Activated CD8-positive, alpha-beta T cell treated with anti-CD3 and anti-CD28 coated beads, Interleukin-2, amount 10 ng/mL, durations not matched to agents 7 days and 5 days (primary cell): ENCODE measurements at regions of chr2 and their contacts with region 1.

Region 1: DNA sequence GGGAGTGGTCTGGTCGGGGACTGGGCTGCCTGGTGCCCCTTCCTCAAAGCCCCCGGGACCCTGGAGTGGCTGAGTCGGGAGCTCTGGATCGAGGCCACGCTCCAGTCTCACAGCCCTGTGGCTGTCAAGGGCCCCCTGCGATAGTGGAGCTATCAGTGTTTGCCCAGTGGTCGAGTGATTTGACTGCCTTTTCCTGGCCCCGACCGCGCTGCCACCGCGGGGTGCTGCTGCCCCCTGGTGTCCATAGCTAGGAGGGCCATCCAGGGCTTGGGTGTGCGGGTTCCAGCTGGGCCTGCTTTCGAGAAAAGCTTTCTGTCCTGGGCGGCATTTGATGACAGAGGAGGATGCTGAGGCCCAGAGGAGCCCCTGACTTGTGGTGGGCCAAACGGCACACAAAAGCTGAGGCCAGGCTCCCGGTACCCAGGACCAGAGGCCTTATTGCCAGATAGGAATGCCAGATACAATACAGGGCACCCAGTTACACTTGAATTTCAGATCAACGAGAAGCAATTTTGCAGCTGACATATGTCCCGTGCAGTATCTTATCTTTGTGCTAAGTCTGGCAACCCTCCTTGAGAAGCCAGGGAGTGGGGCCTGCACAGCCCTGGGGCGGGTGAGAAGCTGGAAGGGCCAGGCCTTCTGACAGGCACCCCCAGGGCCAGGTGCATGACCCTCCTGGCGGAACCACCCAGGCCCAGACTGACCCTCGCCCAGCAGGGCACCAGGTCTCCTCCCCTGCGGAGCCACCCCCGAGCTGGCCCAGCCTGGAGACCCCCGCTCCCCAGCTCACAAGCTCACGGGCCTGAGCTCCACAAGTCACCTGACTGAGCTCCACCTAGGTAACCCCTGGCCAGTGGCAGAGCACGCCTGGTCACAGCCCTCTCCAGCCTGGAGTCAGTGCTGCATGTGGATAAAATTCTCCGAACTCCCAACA is 13.0 kb downstream of the ODC1 start:
- DNase-seq: peak; percentile 83
- ATAC-seq: peak; percentile 66
- H3K4me3 Mint-ChIP-seq: no peak overlapping the region
- H3K27ac Mint-ChIP-seq: peak overlapping the region; percentile 8
- H3K4me1 Mint-ChIP-seq: peaks cover 11% of the 10 kb centered on the region
- H3K27me3 Mint-ChIP-seq: peaks cover 15% of the 10 kb centered on the region

Region 2: DNA sequence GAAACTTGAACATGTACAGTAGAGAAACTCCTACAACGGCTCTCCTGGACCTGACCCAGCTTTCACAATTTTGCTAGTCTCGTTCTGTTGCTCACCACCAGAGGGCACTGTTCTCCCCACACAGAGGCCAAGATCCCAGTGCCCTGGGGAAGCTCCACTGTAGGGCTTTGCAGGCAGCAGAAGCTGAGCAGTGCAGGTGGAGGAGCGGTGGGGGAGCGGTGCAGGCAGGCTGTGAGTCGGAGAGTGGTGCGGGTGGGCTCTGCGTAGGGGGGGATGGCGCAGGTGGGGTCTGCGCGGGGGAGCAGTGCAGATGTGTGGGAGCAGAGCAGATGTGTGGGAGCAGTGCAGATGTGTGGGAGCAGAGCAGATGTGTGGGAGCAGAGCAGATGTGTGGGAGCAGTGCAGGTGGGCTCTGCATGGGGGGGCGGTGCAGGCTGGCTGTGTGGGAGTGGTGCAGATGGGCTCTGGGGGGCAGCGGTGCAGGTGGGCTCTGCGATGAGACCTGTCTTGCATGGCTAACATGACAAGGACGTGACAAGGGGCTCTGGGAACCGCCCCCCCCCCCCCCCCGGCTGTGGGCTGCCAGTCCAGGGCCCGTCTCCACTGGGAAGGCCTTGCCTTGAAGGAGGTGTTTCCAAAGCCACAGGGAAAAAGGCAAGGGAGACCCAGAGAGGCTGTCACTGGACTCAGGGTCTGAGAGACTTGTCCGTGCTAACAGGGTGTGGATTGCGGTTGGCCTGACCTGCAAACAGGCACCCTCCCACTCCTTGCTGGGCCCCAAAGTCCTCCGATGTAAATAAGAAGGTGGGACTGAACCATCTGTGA is 362.3 kb before region 1 on chr2:
- CTCF ChIA-PET with region 1: interaction called, 95 read pairs
- POLR2A ChIA-PET with region 1: interaction called, 9 read pairs
- DNase-seq: peak; percentile 89
- ATAC-seq: peak; percentile 97
- H3K4me3 Mint-ChIP-seq: no peak overlapping the region
- H3K27ac Mint-ChIP-seq: no peak overlapping the region
- H3K4me1 Mint-ChIP-seq: peaks cover 13% of the 10 kb centered on the region
- H3K27me3 Mint-ChIP-seq: peaks cover 51% of the 10 kb centered on the region

Region 3: GRCh38 chr2:10122386-10123280 is 312.5 kb before region 1 on chr2 and contains the start of gene RRM2:
- CTCF ChIA-PET with region 1: interaction called, 74 read pairs
- POLR2A ChIA-PET with region 1: interaction called, 4 read pairs
- DNase-seq: peak; percentile 98
- ATAC-seq: peak; percentile 81
- H3K4me3 Mint-ChIP-seq: peak within 1 kb of the TSS; percentile 98
- H3K27ac Mint-ChIP-seq: peak within 1 kb of the TSS; percentile 99
- H3K4me1 Mint-ChIP-seq: peaks cover 55% of the 10 kb centered on the region
- H3K27me3 Mint-ChIP-seq: no peaks in the 10 kb centered on the region
- total RNA-seq, gene RRM2: 571 to 604 TPM

Region 4: DNA sequence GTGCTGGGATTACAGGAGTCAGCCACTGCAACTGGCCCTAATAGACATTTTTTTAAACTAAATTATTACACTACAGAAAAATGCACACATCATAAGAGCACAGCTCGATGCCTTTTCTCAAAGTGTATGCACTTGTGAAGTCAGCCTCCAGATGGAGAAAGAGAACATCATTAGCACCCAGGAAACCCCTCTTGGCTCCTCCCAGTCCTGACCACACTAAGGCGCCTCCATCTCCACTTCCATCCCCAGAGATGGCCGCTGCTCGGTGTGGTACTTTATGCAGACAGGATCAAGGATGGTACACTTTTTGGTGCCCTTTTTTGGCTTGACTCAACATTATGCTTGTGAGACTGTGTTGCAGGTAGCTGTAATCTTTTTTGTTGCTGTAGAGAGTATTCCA is 277.9 kb before region 1 on chr2:
- CTCF ChIA-PET with region 1: interaction called, 18 read pairs
- POLR2A ChIA-PET with region 1: no interaction called
- DNase-seq: no peak
- ATAC-seq: no peak
- H3K4me3 Mint-ChIP-seq: no peak overlapping the region
- H3K27ac Mint-ChIP-seq: no peak overlapping the region
- H3K4me1 Mint-ChIP-seq: peaks cover 20% of the 10 kb centered on the region
- H3K27me3 Mint-ChIP-seq: no peaks in the 10 kb centered on the region

Region 5: GRCh38 chr2:10185046-10185445 is 250.1 kb before region 1 on chr2:
- CTCF ChIA-PET with region 1: no interaction called
- POLR2A ChIA-PET with region 1: no interaction called
- DNase-seq: no peak
- ATAC-seq: no peak
- H3K4me3 Mint-ChIP-seq: no peak overlapping the region
- H3K27ac Mint-ChIP-seq: no peak overlapping the region
- H3K4me1 Mint-ChIP-seq: no peaks in the 10 kb centered on the region
- H3K27me3 Mint-ChIP-seq: no peaks in the 10 kb centered on the region

Region 6: DNA sequence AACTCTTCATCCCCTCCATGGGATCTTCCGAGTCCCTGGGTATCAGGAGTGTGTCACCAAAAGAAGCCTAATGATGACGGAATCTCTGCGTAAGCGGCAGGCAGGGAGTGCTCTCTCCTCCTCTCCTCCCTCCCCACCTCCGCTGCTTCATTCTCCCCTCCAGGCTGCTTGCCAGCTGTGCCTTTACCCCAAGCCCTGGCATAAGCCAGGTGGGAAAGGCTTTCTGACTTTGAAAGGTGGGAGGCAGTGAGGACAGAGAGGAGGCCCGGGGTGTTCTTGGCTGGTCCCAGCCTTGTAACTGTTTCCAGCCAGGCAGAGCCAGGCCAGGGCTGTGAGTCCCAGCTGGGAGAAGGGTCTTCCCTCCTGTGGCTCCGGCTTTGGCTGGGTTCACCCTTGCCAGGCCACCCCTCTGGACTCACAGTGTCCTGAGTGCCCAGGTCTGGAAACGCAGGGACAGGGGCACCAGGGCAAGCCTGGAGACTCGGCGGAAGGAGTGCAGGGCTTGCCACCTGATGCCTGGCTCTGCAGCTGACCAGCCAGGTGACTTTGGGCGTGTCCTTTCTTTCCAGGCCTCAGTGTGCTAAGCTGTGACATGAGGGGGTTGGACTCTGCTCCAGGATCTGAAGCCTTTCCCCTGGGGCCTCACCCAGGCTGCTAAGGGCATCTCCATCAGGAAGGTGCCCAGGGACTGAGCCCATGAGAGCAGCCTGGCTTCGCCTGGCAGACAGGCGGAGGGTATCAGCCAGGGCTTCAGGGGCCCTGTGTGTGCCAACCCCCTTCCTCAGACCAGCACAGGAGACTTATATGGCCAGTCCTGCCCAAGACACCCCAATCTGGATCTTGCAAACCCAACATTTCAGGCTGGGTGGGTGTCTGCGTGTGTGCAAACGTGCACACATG is 165.2 kb before region 1 on chr2:
- CTCF ChIA-PET with region 1: interaction called, 18 read pairs
- POLR2A ChIA-PET with region 1: no interaction called
- DNase-seq: no peak
- ATAC-seq: no peak
- H3K4me3 Mint-ChIP-seq: no peak overlapping the region
- H3K27ac Mint-ChIP-seq: no peak overlapping the region
- H3K4me1 Mint-ChIP-seq: peaks cover 6% of the 10 kb centered on the region
- H3K27me3 Mint-ChIP-seq: peaks cover 3% of the 10 kb centered on the region

Region 7: GRCh38 chr2:10417551-10418335 is 17.4 kb before region 1 on chr2:
- CTCF ChIA-PET with region 1: interaction called, 11 read pairs
- POLR2A ChIA-PET with region 1: no interaction called
- DNase-seq: no peak
- ATAC-seq: no peak
- H3K4me3 Mint-ChIP-seq: no peak overlapping the region
- H3K27ac Mint-ChIP-seq: no peak overlapping the region
- H3K4me1 Mint-ChIP-seq: peaks cover 8% of the 10 kb centered on the region
- H3K27me3 Mint-ChIP-seq: no peaks in the 10 kb centered on the region

Region 8: GRCh38 chr2:10659898-10660568 is 224.9 kb after region 1 on chr2:
- CTCF ChIA-PET with region 1: interaction called, 13 read pairs
- POLR2A ChIA-PET with region 1: no interaction called
- DNase-seq: peak; percentile 58
- ATAC-seq: peak; percentile 68
- H3K4me3 Mint-ChIP-seq: no peak overlapping the region
- H3K27ac Mint-ChIP-seq: no peak overlapping the region
- H3K4me1 Mint-ChIP-seq: peaks cover 16% of the 10 kb centered on the region
- H3K27me3 Mint-ChIP-seq: no peaks in the 10 kb centered on the region